Activated naive CD4-positive, alpha-beta T cell treated with anti-CD3 and anti-CD28 coated beads for 36 hours (primary cell): ENCODE measurements at regions of chr19 and their contacts with region 1.

Region 1: GRCh38 chr19:38538793-38539528 is 78.8 kb downstream of the MAP4K1 start:
- DNase-seq: peak; percentile 61
- H3K4me3 Mint-ChIP-seq: peak overlapping the region; percentile 14
- H3K27ac Mint-ChIP-seq: peak overlapping the region; percentile 85
- H3K4me1 Mint-ChIP-seq: peaks cover 35% of the 10 kb centered on the region
- H3K27me3 Mint-ChIP-seq: no peaks in the 10 kb centered on the region

Region 2: GRCh38 chr19:38417544-38418506 is 121.1 kb before region 1 on chr19:
- CTCF ChIA-PET with region 1: no interaction called
- intact Hi-C with region 1: no loop called
- DNase-seq: peak; percentile 79
- H3K4me3 Mint-ChIP-seq: peak overlapping the region; percentile 67
- H3K27ac Mint-ChIP-seq: peak overlapping the region; percentile 11
- H3K4me1 Mint-ChIP-seq: peaks cover 15% of the 10 kb centered on the region
- H3K27me3 Mint-ChIP-seq: no peaks in the 10 kb centered on the region

Region 3: DNA sequence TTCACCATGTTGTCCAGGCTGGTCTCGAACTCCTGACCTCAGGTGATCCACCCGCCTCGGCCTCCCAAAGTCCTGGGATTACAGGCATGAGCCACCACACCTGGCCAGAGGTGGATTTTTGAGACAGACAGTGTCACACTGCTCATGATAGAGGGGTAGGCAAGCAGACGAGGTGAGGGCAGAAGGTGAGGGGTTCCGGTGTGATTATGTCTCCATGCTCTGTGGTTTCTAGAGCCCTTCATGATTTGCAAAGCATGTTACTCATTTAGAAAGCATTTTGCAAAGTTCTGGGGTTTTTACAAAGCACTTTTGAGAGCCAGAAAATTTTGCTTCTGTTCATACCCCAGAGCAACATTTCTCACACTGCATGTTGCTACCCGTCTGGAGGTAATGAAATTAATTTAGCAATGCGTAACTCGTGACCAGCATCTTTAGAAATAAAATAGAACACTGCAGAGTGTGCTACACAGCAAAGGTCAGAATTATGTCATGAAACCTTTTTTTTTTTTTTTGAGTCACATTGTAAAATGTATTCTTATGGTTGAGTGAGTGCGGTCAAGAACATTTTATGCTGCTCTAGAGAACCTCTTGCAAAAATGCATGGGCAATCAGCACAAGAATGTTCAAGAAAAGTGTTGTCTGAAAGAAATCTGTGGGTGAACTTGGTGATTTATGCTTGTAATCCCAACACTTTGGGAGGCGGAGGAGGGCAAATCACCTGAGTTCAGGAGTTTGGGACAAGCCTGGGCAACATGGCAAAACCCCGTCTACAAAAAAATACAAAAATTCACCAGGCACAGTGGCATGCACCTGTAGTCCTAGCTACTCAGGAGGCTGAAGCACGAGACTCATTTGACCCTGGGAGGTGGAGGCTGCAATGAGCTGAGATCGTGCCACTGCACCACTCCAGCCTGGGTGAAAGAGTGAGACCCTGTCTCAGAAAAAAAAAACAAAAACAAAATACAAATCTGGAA is 20.8 kb after region 1 on chr19:
- CTCF ChIA-PET with region 1: no interaction called
- intact Hi-C with region 1: loop called (anchors 2 kb)
- DNase-seq: peak; percentile 41
- H3K4me3 Mint-ChIP-seq: no peak overlapping the region
- H3K27ac Mint-ChIP-seq: peak overlapping the region; percentile 53
- H3K4me1 Mint-ChIP-seq: peaks cover 17% of the 10 kb centered on the region
- H3K27me3 Mint-ChIP-seq: peaks cover 13% of the 10 kb centered on the region

Region 4: DNA sequence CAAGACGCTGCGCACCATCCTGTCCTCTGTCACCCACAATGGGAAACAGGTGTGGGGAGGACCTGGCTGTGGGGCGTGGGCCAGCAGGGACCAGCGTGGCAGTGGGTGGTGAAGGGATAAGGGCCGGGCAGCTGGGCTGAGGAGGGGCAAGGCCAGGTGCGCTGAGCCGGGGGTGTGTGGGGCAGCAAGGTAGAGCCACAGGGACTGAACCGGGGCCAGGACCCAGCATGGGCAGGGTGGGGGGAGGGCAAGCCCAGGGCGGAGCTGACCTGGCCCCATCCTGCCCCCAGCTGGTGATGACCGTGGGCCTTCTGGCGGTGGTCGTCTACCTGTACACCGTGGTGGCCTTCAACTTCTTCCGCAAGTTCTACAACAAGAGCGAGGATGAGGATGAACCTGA is 41.1 kb after region 1 on chr19:
- CTCF ChIA-PET with region 1: no interaction called
- intact Hi-C with region 1: no loop called
- DNase-seq: no peak
- H3K4me3 Mint-ChIP-seq: no peak overlapping the region
- H3K27ac Mint-ChIP-seq: no peak overlapping the region
- H3K4me1 Mint-ChIP-seq: no peaks in the 10 kb centered on the region
- H3K27me3 Mint-ChIP-seq: no peaks in the 10 kb centered on the region